K562 (cell line): ENCODE measurements at regions of chr16 and their contacts with region 1.

Region 1: DNA sequence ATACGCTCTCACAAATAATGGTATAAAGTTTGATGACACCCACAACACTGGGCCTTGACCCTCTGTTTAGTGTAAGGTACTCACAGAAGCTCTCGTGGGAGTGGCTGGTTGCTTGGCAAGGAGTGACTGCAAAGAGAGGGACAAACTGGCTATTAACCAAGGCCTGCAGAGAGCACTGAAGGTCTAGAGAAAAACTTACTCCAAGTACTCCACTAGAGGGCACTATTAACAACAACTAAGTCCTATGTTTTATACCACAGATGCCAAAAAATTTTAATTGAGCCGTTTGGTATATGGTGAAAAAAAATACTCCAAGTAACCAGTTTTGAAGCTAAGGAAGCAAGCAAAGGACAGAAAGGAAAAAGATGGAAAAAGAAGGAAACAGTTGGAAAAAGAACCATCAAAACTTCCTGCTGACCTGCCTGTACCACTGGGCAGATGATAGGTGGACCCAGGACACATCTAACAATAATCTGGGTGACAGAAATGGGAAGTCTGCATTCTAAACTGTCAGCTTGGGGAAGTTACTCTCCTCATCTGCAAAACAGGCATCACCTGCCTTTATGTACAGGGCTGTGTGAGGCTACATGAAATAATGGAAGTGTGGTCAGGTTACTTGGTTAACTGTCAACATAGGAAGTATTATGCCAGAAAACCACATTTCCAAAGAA is 23.2 kb downstream of the DYNC1LI2 start:
- DNase-seq: peak; percentile 47 to 66 (median 54)
- ATAC-seq: peak; percentile 92
- H3K4me3 ChIP-seq: no peak overlapping the region
- H3K27ac ChIP-seq: no peak overlapping the region
- H3K4me1 ChIP-seq: no peaks in the 10 kb centered on the region
- H3K27me3 ChIP-seq: no peaks in the 10 kb centered on the region
- CTCF ChIP-seq: peak; percentile 63 to 73 (median 71)
- EP300 ChIP-seq: no peak
- POLR2A ChIP-seq: no peak
- RAD21 ChIP-seq: peak; percentile 35 to 58; a peak in 3 of 4 replicates

Region 2: GRCh38 chr16:65867276-65867960 is 860.8 kb before region 1 on chr16:
- CTCF ChIA-PET with region 1: no interaction called
- POLR2A ChIA-PET with region 1: no interaction called
- in situ Hi-C with region 1: no loop called
- intact Hi-C with region 1: no loop called
- DNase-seq: no peak
- ATAC-seq: no peak
- H3K4me3 ChIP-seq: no peak overlapping the region
- H3K27ac ChIP-seq: no peak overlapping the region
- H3K4me1 ChIP-seq: no peaks in the 10 kb centered on the region
- H3K27me3 ChIP-seq: no peaks in the 10 kb centered on the region; a peak in 1 of 5 replicates
- CTCF ChIP-seq: no peak
- EP300 ChIP-seq: no peak
- POLR2A ChIP-seq: no peak
- RAD21 ChIP-seq: no peak

Region 3: DNA sequence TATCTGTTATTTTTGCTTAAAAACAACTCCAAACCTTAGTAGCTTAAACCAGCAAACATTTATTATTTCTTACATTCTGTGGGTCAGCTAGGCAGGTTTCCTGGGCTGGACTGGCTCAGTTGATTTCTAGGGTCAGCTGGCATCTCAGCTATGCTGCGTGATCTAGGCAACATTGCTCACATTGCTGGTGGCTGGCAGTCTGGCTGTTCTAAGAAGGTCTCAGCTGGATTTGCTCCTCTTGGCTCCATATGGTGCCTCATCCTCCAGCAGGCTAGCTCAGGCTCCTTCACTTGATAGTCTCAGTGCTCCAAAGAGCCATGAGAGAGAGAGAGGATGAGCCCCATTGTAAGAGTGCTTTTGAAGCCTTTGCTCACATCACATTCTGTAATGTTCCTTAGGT is 832.3 kb before region 1 on chr16:
- CTCF ChIA-PET with region 1: no interaction called
- POLR2A ChIA-PET with region 1: no interaction called
- in situ Hi-C with region 1: no loop called
- intact Hi-C with region 1: no loop called
- DNase-seq: no peak
- ATAC-seq: no peak
- H3K4me3 ChIP-seq: no peak overlapping the region
- H3K27ac ChIP-seq: no peak overlapping the region
- H3K4me1 ChIP-seq: no peaks in the 10 kb centered on the region
- H3K27me3 ChIP-seq: no peaks in the 10 kb centered on the region
- CTCF ChIP-seq: no peak
- EP300 ChIP-seq: no peak
- POLR2A ChIP-seq: no peak
- RAD21 ChIP-seq: no peak

Region 4: GRCh38 chr16:66416939-66417700 is 311.1 kb before region 1 on chr16:
- CTCF ChIA-PET with region 1: no interaction called
- POLR2A ChIA-PET with region 1: no interaction called
- in situ Hi-C with region 1: no loop called
- intact Hi-C with region 1: no loop called
- DNase-seq: no peak
- ATAC-seq: no peak
- H3K4me3 ChIP-seq: no peak overlapping the region
- H3K27ac ChIP-seq: no peak overlapping the region
- H3K4me1 ChIP-seq: no peaks in the 10 kb centered on the region
- H3K27me3 ChIP-seq: peaks cover 0 to 24% of the 10 kb centered on the region in 2 experiments; a peak in 3 of 5 replicates
- CTCF ChIP-seq: no peak
- EP300 ChIP-seq: no peak
- POLR2A ChIP-seq: no peak
- RAD21 ChIP-seq: no peak

Region 5: DNA sequence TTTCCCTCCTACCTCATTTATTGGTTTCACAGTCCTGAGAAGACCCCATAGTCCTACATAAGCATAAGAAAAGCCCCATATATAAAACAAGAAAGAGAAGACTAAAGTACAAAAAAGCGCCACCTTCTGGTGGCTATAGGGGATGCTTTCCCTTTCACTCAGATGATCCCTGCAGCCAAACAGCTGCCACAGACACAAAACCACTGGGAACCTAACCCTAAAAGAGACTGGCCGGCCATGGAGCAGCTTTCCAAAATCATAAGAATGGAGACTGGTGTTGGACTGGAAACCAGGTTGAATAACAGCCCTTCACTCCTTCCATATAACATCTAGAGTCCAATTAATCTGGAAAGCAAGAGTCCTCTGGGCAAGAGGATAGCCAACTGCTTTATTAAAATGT is 11.8 kb after region 1 on chr16:
- CTCF ChIA-PET with region 1: no interaction called
- POLR2A ChIA-PET with region 1: interaction called, 33 read pairs
- in situ Hi-C with region 1: no loop called
- intact Hi-C with region 1: no loop called
- DNase-seq: peak; percentile 56 to 73 (median 67)
- ATAC-seq: peak; percentile 80
- H3K4me3 ChIP-seq: no peak overlapping the region
- H3K27ac ChIP-seq: peak overlapping the region; percentile 43; the same call in 1 of the 3 replicates
- H3K4me1 ChIP-seq: peaks cover 12 to 24% of the 10 kb centered on the region in 2 experiments; a peak in 4 of 5 replicates
- H3K27me3 ChIP-seq: no peaks in the 10 kb centered on the region
- CTCF ChIP-seq: peak; percentile 59 to 72 (median 67); a peak in 5 of 6 replicates
- EP300 ChIP-seq: no peak
- POLR2A ChIP-seq: no peak
- RAD21 ChIP-seq: peak; percentile 15 to 38; a peak in 2 of 4 replicates

Region 6: GRCh38 chr16:66872943-66873684 is 144.9 kb after region 1 on chr16:
- CTCF ChIA-PET with region 1: interaction called, 3 read pairs
- POLR2A ChIA-PET with region 1: interaction called, 3 read pairs
- in situ Hi-C with region 1: no loop called
- intact Hi-C with region 1: loop called (anchors 1 kb)
- DNase-seq: peak; percentile 81 to 95 (median 86)
- ATAC-seq: peak; percentile 98
- H3K4me3 ChIP-seq: peak overlapping the region; percentile 20
- H3K27ac ChIP-seq: peak overlapping the region; percentile 68
- H3K4me1 ChIP-seq: peaks cover 6 to 16% of the 10 kb centered on the region in 2 experiments; a peak in 4 of 5 replicates
- H3K27me3 ChIP-seq: no peaks in the 10 kb centered on the region
- CTCF ChIP-seq: peak; percentile 94 to 97 (median 95)
- EP300 ChIP-seq: peak; percentile 4; the same call in 1 of the 2 replicates
- POLR2A ChIP-seq: peak; percentile 55; the same call in 1 of the 2 replicates
- RAD21 ChIP-seq: peak; percentile 49 to 72